AG04450 (cell line): ENCODE measurements at regions of chr1 and their contacts with region 1.

Region 1: GRCh38 chr1:156226116-156226538 is 13.3 kb downstream of the PMF1 start:
- DNase-seq: no peak
- H3K4me3 ChIP-seq: no peak overlapping the region
- H3K27ac ChIP-seq: no peak overlapping the region
- H3K27me3 ChIP-seq: no peaks in the 10 kb centered on the region
- CTCF ChIP-seq: no peak

Region 2: GRCh38 chr1:156090822-156091188 is 135.3 kb before region 1 on chr1:
- CTCF ChIA-PET with region 1: interaction called, 90 read pairs
- POLR2A ChIA-PET with region 1: interaction called, 9 read pairs
- DNase-seq: peak; percentile 48
- H3K4me3 ChIP-seq: no peak overlapping the region
- H3K27ac ChIP-seq: no peak overlapping the region
- H3K27me3 ChIP-seq: no peaks in the 10 kb centered on the region
- CTCF ChIP-seq: peak; percentile 77

Region 3: GRCh38 chr1:156129706-156130581 is 96.2 kb before region 1 on chr1:
- CTCF ChIA-PET with region 1: interaction called, 40 read pairs
- POLR2A ChIA-PET with region 1: interaction called, 3 read pairs
- DNase-seq: peak; percentile 93
- H3K4me3 ChIP-seq: peak overlapping the region; percentile 49
- H3K27ac ChIP-seq: peak overlapping the region; percentile 100
- H3K27me3 ChIP-seq: no peaks in the 10 kb centered on the region
- CTCF ChIP-seq: peak; percentile 95

Region 4: DNA sequence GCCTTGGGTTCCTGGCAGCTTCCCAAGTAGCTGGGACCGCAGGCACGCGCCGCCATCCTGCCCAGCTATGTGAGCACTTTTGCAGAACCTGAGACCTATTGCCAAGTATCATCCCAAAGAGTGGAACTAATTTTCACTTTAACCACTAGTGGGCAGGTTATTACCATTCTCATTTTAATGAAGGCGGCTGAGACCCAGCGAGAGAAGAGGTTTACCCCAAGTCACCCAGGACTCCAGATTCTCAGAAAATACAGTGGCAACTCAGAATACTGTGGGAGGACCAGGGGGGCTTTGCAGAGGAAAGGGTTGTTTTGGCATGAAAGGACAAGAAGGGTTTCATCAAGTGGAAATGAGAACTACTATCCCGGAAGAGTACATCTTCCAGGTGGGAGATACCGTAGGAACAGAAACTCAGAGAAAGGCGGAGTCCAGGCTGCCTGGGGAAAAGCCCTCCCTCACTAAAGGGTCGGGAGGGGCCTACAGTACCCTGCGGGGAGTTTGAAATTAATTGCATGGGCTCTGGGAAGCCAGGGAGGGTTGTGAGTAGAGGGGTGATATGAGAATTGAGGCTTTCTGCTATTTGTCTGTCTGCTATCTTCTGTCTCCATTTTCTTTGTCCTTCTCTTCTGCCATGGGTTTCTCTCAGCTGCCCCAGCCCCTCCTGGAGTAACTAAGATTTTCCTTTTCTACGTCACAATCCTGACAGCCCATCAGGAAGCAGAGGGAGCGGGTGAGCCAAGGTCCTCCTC is 79.9 kb before region 1 on chr1:
- CTCF ChIA-PET with region 1: interaction called, 136 read pairs
- POLR2A ChIA-PET with region 1: interaction called, 5 read pairs
- DNase-seq: peak; percentile 86
- H3K4me3 ChIP-seq: no peak overlapping the region
- H3K27ac ChIP-seq: no peak overlapping the region
- H3K27me3 ChIP-seq: peaks cover 13% of the 10 kb centered on the region
- CTCF ChIP-seq: peak; percentile 64

Region 5: GRCh38 chr1:156160743-156161171 is 65.4 kb before region 1 on chr1:
- CTCF ChIA-PET with region 1: interaction called, 11 read pairs
- POLR2A ChIA-PET with region 1: no interaction called
- DNase-seq: peak; percentile 42
- H3K4me3 ChIP-seq: peak overlapping the region; percentile 52
- H3K27ac ChIP-seq: no peak overlapping the region
- H3K27me3 ChIP-seq: no peaks in the 10 kb centered on the region
- CTCF ChIP-seq: no peak

Region 6: DNA sequence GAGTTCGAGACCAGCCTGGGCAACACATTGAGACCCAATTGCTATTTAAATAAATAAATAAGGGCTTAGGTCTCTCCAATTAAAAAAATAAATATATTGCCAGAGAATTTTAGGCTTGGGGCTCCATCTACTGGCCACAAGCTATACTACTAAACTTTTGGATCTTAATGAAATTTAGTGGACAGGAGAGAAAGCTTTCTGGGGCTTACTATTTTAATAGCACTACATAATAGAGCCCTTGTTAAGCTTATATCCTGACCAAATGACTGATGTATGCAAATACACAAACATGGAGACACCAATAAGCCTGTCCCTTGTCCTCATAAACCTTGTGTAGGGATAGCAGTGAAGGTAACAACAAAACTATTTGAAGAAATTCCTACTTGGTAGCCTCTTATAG is 93.5 kb after region 1 on chr1:
- CTCF ChIA-PET with region 1: interaction called, 16 read pairs
- POLR2A ChIA-PET with region 1: interaction called, 4 read pairs
- DNase-seq: no peak
- H3K4me3 ChIP-seq: no peak overlapping the region
- H3K27ac ChIP-seq: no peak overlapping the region
- H3K27me3 ChIP-seq: no peaks in the 10 kb centered on the region
- CTCF ChIP-seq: peak; percentile 65